Gastrocnemius medialis (tissue), 4 donors: ENCODE measurements at regions of chr7 and their contacts with region 1.

Region 1: GRCh38 chr7:151104411-151105235 is 18.3 kb downstream of the AGAP3 start:
- DNase-seq: no peak
- ATAC-seq: no peak
- H3K4me3 ChIP-seq: no peak overlapping the region
- H3K27ac ChIP-seq: no peak overlapping the region
- H3K4me1 ChIP-seq: peaks cover 0 to 10% of the 10 kb centered on the region in 2 donors
- H3K27me3 ChIP-seq: no peaks in the 10 kb centered on the region
- CTCF ChIP-seq: no peak
- POLR2A ChIP-seq: no peak

Region 2: DNA sequence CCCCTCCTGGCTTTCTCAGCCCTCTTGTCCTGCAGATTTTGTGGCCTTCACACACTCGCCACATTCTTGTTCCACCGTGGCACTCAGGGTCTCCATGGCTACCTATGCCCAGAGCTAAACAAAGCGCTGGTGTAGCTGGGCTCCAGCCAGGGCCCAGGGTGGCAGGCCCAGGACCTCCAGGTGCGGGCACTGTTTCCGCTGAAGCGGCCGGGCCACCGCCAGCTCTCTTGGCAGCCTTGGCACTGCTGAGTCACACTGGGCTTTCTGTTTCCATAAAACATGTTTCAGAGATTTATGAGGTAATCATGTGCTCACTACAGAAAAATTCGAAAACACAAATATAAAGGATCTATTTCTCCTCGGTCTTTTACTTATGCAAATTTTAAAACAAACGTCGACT is 201.0 kb before region 1 on chr7:
- in situ Hi-C with region 1: no loop called
- intact Hi-C with region 1: no loop called
- DNase-seq: no peak
- ATAC-seq: no peak
- H3K4me3 ChIP-seq: no peak overlapping the region
- H3K27ac ChIP-seq: no peak overlapping the region
- H3K4me1 ChIP-seq: peaks cover 0 to 7% of the 10 kb centered on the region in 2 donors
- H3K27me3 ChIP-seq: peaks cover 0 to 7% (median 3%) of the 10 kb centered on the region in 3 donors
- CTCF ChIP-seq: no peak
- POLR2A ChIP-seq: no peak

Region 3: GRCh38 chr7:151038951-151039849 is 65.4 kb before region 1 on chr7:
- in situ Hi-C with region 1: loop called in 2 of 4 experiments (anchors 10 kb)
- intact Hi-C with region 1: no loop called
- DNase-seq: peak; percentile 40 to 50
- ATAC-seq: peak; percentile 69 to 73
- H3K4me3 ChIP-seq: no peak overlapping the region
- H3K27ac ChIP-seq: peak overlapping the region in 1 of 4 donors; percentile 18
- H3K4me1 ChIP-seq: peaks cover 13% of the 10 kb centered on the region in 2 donors
- H3K27me3 ChIP-seq: no peaks in the 10 kb centered on the region
- CTCF ChIP-seq: no peak
- POLR2A ChIP-seq: no peak

Region 4: GRCh38 chr7:151046603-151047504 is 57.8 kb before region 1 on chr7:
- in situ Hi-C with region 1: loop called in 1 of 4 experiments (anchors 10 kb)
- intact Hi-C with region 1: no loop called
- DNase-seq: no peak
- ATAC-seq: no peak
- H3K4me3 ChIP-seq: no peak overlapping the region
- H3K27ac ChIP-seq: no peak overlapping the region
- H3K4me1 ChIP-seq: peaks cover 0 to 6% of the 10 kb centered on the region in 2 donors
- H3K27me3 ChIP-seq: peaks cover 0 to 8% (median 0%) of the 10 kb centered on the region in 3 donors
- CTCF ChIP-seq: no peak
- POLR2A ChIP-seq: no peak